WTC11 (cell line): ENCODE measurements at regions of chr5 and their contacts with region 1.

Region 1: DNA sequence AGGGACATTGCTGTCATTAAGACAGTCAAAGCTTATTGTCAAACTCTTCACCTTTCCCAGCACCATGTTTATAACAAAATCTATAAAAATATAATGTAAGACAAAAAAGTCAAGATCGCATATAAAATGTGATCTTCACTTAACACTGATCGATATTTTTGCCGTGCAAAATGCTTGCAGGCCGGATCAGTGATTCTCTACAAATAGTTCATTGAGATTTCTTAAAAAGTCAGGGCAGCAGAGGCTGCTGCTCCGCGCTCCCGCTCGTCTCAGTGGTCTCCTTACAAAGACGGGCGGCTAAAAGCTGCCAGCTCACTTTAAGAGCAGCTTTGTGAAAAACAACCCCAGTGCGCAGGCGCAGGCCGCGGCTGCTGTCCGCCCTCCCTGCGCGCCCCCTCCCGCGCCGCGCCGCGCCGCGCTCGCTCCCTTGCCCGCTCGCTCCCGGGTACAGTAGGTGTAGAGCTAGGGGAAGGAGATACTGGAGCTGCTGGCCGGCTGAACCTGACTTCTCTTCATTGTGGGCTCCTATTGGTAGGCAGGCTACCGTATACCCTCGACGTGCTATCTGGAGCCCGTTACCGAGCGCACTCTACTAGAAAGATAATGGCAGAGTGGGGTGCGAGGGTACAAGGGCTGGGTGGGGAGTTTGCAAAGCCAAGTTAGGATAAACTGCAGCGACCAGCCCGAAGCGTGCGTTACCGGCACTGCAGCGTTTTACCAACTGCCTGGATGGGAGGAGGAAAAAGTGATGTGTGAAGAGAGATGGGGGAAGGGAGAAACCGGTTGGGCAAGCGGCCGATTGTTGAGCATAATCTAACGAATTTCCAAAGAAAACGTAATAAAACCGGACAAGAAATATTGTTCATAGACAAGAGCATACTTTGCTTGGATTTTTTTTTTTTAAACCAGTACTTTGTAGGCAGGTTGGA is at the start of gene ARRDC3:
- DNase-seq: peak; percentile 98
- ATAC-seq: peak; percentile 74
- H3K4me3 Mint-ChIP-seq: peak within 1 kb of the TSS; percentile 87
- H3K27ac Mint-ChIP-seq: peak within 1 kb of the TSS; percentile 100
- H3K4me1 Mint-ChIP-seq: peaks cover 18% of the 10 kb centered on the region
- H3K27me3 Mint-ChIP-seq: no peaks in the 10 kb centered on the region
- CTCF ChIP-seq: no peak
- total RNA-seq, gene ARRDC3: 10.3 to 25.1 TPM (median 21.8 TPM) in 3 replicates

Region 2: DNA sequence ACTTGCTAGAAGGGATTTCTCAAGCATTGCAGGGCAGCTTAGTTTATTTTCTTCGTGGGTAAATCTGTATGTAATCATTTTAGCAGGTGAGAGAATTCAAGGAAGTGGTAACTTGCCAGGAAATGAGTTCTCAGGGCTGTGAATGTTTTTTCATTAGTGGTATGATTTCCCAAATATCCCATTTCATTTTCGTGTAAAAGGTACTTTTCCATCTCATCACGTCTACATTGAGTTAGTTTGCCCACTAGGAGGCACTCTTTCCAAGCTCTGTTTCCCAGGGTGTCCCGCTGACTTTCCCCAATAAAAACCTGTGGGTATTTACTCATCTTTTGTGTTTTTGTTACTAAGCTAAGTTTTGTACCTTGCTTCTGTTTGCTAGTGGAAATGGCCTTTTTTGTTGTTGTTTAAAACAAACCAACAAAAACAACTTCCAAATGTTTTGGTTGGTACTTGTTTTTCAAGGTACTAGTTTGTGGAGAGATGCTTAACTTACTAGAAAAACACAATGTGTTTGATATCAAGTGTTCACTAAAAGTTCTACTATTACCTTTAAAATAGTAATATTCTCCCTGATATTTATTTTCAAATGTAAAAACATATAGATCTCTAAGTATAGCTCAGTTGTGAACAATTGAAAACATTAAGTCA is 451.1 kb before region 1 on chr5:
- CTCF ChIA-PET with region 1: interaction called, 18 read pairs
- POLR2A ChIA-PET with region 1: interaction called, 5 read pairs
- DNase-seq: peak; percentile 40
- ATAC-seq: peak; percentile 65
- H3K4me3 Mint-ChIP-seq: peak overlapping the region; percentile 16; the same call in 1 of the 2 replicates
- H3K27ac Mint-ChIP-seq: peak overlapping the region; percentile 85
- H3K4me1 Mint-ChIP-seq: peaks cover 38% of the 10 kb centered on the region
- H3K27me3 Mint-ChIP-seq: no peaks in the 10 kb centered on the region
- CTCF ChIP-seq: peak; percentile 73

Region 3: GRCh38 chr5:91219803-91220371 is 163.4 kb before region 1 on chr5:
- CTCF ChIA-PET with region 1: interaction called, 91 read pairs
- POLR2A ChIA-PET with region 1: interaction called, 10 read pairs
- DNase-seq: no peak
- ATAC-seq: peak; percentile 77
- H3K4me3 Mint-ChIP-seq: no peak overlapping the region
- H3K27ac Mint-ChIP-seq: no peak overlapping the region
- H3K4me1 Mint-ChIP-seq: no peaks in the 10 kb centered on the region
- H3K27me3 Mint-ChIP-seq: no peaks in the 10 kb centered on the region
- CTCF ChIP-seq: 0 out of 2 replicates have a peak, but pooled peaks have one; percentile 15

Region 4: GRCh38 chr5:91235271-91235694 is 148.0 kb before region 1 on chr5:
- CTCF ChIA-PET with region 1: interaction called, 16 read pairs
- POLR2A ChIA-PET with region 1: interaction called, 5 read pairs
- DNase-seq: no peak
- ATAC-seq: no peak
- H3K4me3 Mint-ChIP-seq: no peak overlapping the region
- H3K27ac Mint-ChIP-seq: no peak overlapping the region
- H3K4me1 Mint-ChIP-seq: peaks cover 4% of the 10 kb centered on the region
- H3K27me3 Mint-ChIP-seq: no peaks in the 10 kb centered on the region
- CTCF ChIP-seq: no peak

Region 5: DNA sequence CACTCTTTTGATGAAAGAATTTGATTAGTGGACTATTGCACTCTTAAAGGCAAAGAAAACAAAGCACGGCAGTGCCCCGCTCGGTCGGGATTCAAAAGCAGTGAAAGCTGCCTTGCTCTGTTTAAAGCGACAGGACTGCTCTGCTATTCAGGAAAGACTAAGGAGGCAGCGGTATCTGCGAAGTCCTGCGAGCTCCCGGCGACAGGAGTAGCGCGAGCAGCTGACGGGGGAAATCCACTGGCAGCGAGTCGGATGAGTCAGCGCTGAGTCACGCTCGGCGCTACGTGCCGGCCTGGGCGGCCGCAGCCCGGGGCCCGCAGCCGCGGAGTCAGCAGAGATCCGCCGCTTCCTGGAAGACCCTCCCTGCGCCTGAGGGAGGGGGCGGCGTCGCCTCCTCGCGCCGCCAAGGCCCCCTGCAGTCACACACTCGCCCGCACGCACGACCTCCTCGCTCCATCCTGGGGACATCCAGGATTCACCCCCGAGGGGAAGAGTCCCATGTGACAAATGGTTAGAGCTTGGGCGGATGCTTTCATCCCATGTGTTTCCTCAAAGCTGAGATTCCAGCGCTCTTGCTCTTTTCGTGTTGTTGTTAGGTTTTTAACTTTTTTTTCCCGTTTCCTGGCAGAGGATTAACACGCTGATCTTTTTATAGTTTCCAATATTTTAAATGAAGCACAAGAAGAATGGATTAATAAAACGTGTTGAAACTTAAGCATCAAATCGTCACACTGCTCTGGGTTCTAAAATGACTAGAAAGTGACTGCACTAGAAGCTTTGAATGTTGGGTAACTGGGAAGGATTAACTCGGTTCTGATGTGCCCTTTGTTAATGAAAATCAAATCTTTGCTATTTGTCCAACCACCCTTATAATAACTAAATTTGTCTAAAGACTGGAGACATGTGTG is 102.7 kb before region 1 on chr5:
- CTCF ChIA-PET with region 1: interaction called, 17 read pairs
- POLR2A ChIA-PET with region 1: interaction called, 35 read pairs
- DNase-seq: peak; percentile 91
- ATAC-seq: peak; percentile 96
- H3K4me3 Mint-ChIP-seq: peak overlapping the region; percentile 86
- H3K27ac Mint-ChIP-seq: peak overlapping the region; percentile 96
- H3K4me1 Mint-ChIP-seq: peaks cover 25% of the 10 kb centered on the region
- H3K27me3 Mint-ChIP-seq: peaks cover 14% of the 10 kb centered on the region
- CTCF ChIP-seq: no peak

Region 6: GRCh38 chr5:91366571-91366970 is 16.7 kb before region 1 on chr5:
- CTCF ChIA-PET with region 1: interaction called, 6 read pairs
- POLR2A ChIA-PET with region 1: interaction called, 23 read pairs
- DNase-seq: no peak
- ATAC-seq: no peak
- H3K4me3 Mint-ChIP-seq: no peak overlapping the region
- H3K27ac Mint-ChIP-seq: no peak overlapping the region
- H3K4me1 Mint-ChIP-seq: no peaks in the 10 kb centered on the region
- H3K27me3 Mint-ChIP-seq: no peaks in the 10 kb centered on the region
- CTCF ChIP-seq: no peak

Region 7: GRCh38 chr5:91419571-91420537 is 36.6 kb after region 1 on chr5:
- CTCF ChIA-PET with region 1: interaction called, 109 read pairs
- POLR2A ChIA-PET with region 1: interaction called, 9 read pairs
- DNase-seq: peak; percentile 60
- ATAC-seq: no peak
- H3K4me3 Mint-ChIP-seq: no peak overlapping the region
- H3K27ac Mint-ChIP-seq: no peak overlapping the region
- H3K4me1 Mint-ChIP-seq: peaks cover 25% of the 10 kb centered on the region
- H3K27me3 Mint-ChIP-seq: no peaks in the 10 kb centered on the region
- CTCF ChIP-seq: peak; percentile 74

Region 8: GRCh38 chr5:91541696-91542095 is 158.4 kb after region 1 on chr5:
- CTCF ChIA-PET with region 1: no interaction called
- POLR2A ChIA-PET with region 1: no interaction called
- DNase-seq: no peak
- ATAC-seq: no peak
- H3K4me3 Mint-ChIP-seq: no peak overlapping the region
- H3K27ac Mint-ChIP-seq: no peak overlapping the region
- H3K4me1 Mint-ChIP-seq: no peaks in the 10 kb centered on the region
- H3K27me3 Mint-ChIP-seq: no peaks in the 10 kb centered on the region
- CTCF ChIP-seq: no peak